Dorsolateral prefrontal cortex (tissue), 120 donors: ENCODE measurements at regions of chr5 and their contacts with region 1.

Region 1: GRCh38 chr5:69234457-69235268 is at the start of gene CDK7:
- DNase-seq: peak; percentile 90 to 96 (median 95)
- H3K4me3 ChIP-seq: peak within 1 kb of the TSS; percentile 56 to 99 (median 87)
- H3K27ac ChIP-seq: peak within 1 kb of the TSS in 56 of 59 donors; percentile 2 to 91 (median 79)
- H3K27me3 ChIP-seq: no peaks in the 10 kb centered on the region
- CTCF ChIP-seq: peak in 30 of 56 donors; percentile 11 to 55 (median 27)
- total RNA-seq, gene CDK7: 11.8 to 43.6 (median 24.9) TPM

Region 2: DNA sequence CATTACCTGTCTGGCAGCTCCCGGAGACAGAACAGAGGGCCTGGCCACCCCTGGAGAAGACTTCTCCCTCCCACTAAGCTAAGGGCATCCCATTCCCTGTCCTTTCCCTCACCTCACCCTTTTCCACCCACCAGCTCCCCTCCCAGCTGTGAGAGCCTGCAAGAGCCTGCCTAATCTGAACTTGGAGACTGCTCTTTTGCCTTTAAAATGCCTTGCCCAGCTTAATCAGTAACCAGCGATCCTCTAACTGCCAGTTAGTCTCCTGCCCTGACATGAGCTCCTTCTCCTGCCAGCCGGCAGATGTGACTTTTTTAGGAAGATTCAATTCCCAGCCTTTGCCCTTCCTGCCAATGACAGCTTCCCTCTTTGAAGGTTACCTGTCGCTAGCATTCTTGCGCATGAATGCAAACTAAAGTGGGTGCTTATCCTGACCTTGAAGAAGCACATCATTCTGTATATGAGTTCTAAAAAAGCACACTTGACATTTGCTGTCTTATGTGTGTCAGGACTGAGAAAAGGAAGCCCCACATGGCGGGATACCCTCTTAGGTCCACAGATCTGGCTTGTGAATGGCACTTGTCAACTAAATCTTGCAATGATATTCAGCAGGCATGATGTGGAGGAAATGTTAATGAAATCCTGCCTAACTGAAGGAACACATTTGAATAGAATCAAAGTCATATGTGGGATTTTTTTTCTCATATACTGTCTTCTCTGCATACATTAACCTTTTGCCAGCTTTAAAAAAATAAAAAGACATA is 552.1 kb before region 1 on chr5:
- intact Hi-C with region 1: no loop called
- DNase-seq: no peak
- H3K4me3 ChIP-seq: no peak overlapping the region
- H3K27ac ChIP-seq: peak overlapping the region in 5 of 59 donors; percentile 13 to 49 (median 26)
- H3K27me3 ChIP-seq: no peaks in the 10 kb centered on the region
- CTCF ChIP-seq: no peak

Region 3: GRCh38 chr5:69166686-69167492 is 67.8 kb before region 1 on chr5 and contains the start of gene CCNB1:
- intact Hi-C with region 1: loop called (anchors 2 to 10 kb)
- DNase-seq: peak; percentile 95 to 99 (median 98)
- H3K4me3 ChIP-seq: peak within 1 kb of the TSS; percentile 54 to 99 (median 80)
- H3K27ac ChIP-seq: peak within 1 kb of the TSS in 44 of 59 donors; percentile 15 to 87 (median 60)
- H3K27me3 ChIP-seq: no peaks in the 10 kb centered on the region
- CTCF ChIP-seq: peak in 43 of 56 donors; percentile 6 to 63 (median 37)
- total RNA-seq, gene CCNB1: 5.0 to 23.5 (median 11.9) TPM

Region 4: GRCh38 chr5:69217548-69218526 is 16.8 kb before region 1 on chr5:
- intact Hi-C with region 1: loop called in 1 of 2 experiments (anchors 2 kb)
- DNase-seq: peak; percentile 93 to 98 (median 96)
- H3K4me3 ChIP-seq: peak overlapping the region; percentile 70 to 100 (median 98)
- H3K27ac ChIP-seq: peak overlapping the region; percentile 30 to 96 (median 87)
- H3K27me3 ChIP-seq: no peaks in the 10 kb centered on the region
- CTCF ChIP-seq: peak in 43 of 56 donors; percentile 6 to 54 (median 30)

Region 5: DNA sequence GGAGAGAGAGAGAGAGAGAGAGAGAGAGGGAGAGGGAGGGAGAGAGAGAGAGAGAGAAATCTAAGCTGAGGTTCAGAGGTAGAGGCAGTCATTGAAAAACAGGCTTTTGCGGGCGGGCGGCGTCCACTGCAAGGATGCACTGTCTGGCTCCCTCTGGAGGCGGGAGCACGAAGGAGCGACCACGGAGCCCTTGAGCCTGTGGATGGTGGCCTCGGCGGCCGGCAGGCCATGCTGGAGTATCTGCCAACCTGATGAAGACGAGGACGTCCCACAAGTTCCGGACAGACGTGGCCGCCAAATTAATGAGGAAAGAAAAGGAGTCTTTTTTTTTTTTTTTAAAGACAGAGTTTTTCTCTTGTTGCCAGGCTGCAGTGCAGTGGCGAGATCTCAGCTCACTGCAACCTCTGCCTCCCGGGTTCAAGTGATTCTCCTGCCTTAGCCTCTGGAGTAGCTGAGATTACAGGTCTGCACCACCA is 100.2 kb after region 1 on chr5:
- intact Hi-C with region 1: loop called in 1 of 2 experiments (anchors 10 kb)
- DNase-seq: peak; percentile 79 to 88 (median 86)
- H3K4me3 ChIP-seq: peak overlapping the region in 37 of 59 donors; percentile 7 to 51 (median 32)
- H3K27ac ChIP-seq: peak overlapping the region in 4 of 59 donors; percentile 16 to 39 (median 24)
- H3K27me3 ChIP-seq: no peaks in the 10 kb centered on the region
- CTCF ChIP-seq: peak; percentile 30 to 81 (median 70)

Region 6: GRCh38 chr5:69517763-69518212 is 283.1 kb after region 1 on chr5:
- intact Hi-C with region 1: no loop called
- DNase-seq: no peak
- H3K4me3 ChIP-seq: no peak overlapping the region
- H3K27ac ChIP-seq: peak overlapping the region in 2 of 59 donors; percentile 43 to 47
- H3K27me3 ChIP-seq: no peaks in the 10 kb centered on the region
- CTCF ChIP-seq: no peak